Motor neuron (in vitro differentiated cells): ENCODE measurements at regions of chr21 and their contacts with region 1.

Region 1: DNA sequence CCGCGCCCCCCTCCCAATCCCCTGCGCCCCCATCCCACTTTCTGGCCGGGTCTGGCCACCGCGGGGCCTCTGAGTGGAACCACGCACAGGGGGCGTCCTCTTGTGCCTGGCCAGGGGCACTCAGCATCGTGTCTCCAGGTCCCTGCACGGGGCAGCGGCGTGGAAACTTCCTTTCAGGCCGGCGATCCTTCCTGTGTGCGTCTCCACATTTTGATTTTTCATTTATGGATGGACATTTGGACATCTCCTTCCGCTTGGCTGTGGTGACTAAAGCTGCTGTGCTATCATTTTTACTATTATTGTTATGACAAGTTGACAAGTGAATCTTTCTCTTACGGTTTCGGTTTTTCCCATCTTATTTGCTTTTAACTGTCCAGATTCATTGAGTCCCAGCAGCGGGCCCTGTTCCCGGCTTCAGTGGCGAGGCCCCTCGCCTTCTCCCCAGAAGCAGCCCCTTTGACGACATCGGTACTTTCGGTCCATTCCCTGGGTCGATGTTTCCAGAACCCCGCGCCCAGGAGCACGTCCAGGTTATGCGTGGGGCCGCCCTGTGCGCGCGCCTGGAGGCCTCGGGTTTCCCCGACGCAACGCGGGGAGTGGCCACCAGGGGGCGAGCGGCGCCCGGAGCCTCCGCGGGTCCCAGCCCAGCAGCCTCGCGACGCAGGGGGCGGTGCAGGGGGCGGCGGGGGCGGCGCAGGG is 12.4 kb upstream of the SLC19A1 start:
- ATAC-seq: peak; percentile 12 to 49 (median 34)
- H3K4me3 ChIP-seq: peak overlapping the region; percentile 21 to 43 (median 29)
- H3K27ac ChIP-seq: peak overlapping the region in 1 of 2 donors; percentile 33
- H3K4me1 ChIP-seq: peaks cover 15 to 22% of the 10 kb centered on the region in 2 donors

Region 2: DNA sequence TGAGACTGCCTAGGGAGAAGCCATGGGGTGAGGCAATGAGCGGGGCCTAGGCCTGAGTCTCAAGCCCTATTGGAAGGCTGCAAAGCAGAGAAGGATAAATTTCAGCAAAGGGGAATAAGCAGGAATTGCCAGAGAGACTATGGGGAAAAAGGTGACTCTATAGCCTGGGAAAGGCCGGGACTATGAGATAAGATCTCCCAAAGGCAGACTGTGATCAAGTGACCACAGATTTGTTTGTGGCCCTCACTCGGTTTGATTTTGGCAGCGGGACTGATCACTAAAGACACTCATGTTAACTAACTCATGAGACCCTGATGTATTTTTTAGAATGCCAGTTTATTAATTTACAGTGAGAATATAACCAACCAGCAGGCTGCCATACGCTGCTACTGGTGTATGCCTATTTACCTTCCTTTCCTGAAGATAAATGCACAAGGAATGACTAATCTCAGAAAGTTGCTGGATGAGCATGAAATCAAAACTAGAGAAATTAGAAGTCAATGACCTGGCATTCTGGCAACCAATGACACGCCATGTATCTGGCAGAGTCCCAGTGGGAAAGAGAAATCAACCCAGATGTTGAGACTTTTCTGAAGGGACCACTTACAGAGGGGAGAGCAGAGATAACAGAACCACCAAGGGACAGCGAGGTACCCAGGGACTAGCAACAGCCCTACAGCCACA is 1899.7 kb before region 1 on chr21:
- in situ Hi-C with region 1: no loop called
- ATAC-seq: no peak
- H3K4me3 ChIP-seq: no peak overlapping the region
- H3K27ac ChIP-seq: no peak overlapping the region
- H3K4me1 ChIP-seq: peaks cover 5 to 7% of the 10 kb centered on the region in 2 donors

Region 3: GRCh38 chr21:45224189-45224938 is 330.3 kb before region 1 on chr21:
- in situ Hi-C with region 1: no loop called
- ATAC-seq: no peak
- H3K4me3 ChIP-seq: no peak overlapping the region
- H3K27ac ChIP-seq: no peak overlapping the region
- H3K4me1 ChIP-seq: no peaks in the 10 kb centered on the region

Region 4: DNA sequence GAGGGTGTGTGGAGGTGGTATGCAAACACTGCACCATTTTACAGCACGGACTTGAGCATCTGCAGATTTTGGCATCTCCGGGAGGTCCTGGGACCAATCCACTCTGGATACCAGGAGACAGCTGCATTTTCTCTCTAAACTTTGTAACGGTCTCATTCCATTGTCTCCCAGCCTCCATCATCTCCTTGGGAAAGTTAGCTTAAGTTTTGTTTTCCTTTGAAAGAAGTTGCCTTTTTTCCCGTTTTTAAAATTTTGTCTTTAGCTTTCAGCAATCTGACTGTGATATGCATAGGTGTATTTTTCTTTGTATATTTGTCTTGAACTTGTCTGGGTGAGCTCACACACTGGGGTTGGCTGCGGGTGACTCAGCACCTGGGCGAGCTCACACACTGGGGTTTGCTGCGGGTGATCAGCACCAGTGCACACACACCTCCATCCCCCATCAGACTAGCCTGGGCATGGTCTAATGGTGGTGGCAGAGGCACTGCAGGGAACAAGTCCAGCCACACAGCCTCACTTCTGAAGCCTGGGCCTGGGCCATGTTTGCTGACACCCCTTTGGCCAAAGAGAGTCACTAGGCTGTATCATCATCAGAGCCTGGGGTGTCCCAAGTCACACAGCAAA is 181.8 kb before region 1 on chr21:
- in situ Hi-C with region 1: no loop called
- ATAC-seq: peak in 3 of 8 experiments; percentile 41 to 74 (median 52)
- H3K4me3 ChIP-seq: no peak overlapping the region
- H3K27ac ChIP-seq: no peak overlapping the region
- H3K4me1 ChIP-seq: peaks cover 21% of the 10 kb centered on the region in 2 donors

Region 5: DNA sequence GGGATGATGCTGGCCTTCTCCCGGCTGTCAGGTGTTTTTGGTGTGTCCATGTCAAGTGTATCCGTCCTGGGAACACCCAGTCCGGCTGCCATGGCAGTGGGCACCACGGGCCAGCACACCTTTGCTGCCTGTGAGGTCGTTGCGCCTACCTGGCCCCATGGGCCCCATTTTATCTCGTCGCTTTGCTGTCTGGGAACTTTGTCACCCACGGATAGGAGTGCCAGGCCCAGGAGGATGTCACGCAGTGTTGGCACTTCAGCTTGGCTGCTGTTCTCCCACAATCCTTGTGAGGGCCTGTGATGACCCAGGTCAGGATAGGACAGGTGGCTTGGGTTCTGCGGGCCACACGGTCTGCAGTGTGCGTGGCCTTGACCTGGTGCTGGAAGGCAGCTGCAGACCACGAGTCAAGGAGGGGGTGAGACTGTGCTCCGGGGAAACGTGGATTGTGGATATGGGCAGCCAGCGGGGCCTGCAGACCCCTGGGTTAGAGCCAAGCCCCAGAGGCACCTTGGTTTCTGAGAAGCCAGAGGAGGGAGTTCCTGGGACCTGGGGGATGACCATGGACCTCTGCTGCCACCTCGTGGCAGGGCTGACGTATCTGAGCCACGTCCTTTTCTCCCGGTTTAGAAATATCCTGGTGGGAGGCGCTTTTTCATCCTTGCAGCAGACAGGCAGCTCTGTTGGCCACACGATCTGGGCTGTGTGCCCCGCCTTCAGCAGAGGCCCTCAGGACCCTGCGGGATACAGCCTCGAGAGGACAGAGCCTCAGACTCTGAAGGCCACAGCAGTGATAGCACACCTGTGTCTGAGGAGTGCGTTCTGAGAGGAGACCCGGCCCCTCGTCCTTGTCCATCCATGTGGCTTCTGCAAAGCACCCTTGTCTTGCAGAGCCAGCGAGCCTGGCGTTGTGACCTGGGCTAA is 265.8 kb after region 1 on chr21:
- in situ Hi-C with region 1: loop called (anchors 10 to 25 kb)
- ATAC-seq: peak; percentile 93 to 98 (median 96)
- H3K4me3 ChIP-seq: no peak overlapping the region
- H3K27ac ChIP-seq: no peak overlapping the region
- H3K4me1 ChIP-seq: peaks cover 11 to 20% of the 10 kb centered on the region in 2 donors

Region 6: DNA sequence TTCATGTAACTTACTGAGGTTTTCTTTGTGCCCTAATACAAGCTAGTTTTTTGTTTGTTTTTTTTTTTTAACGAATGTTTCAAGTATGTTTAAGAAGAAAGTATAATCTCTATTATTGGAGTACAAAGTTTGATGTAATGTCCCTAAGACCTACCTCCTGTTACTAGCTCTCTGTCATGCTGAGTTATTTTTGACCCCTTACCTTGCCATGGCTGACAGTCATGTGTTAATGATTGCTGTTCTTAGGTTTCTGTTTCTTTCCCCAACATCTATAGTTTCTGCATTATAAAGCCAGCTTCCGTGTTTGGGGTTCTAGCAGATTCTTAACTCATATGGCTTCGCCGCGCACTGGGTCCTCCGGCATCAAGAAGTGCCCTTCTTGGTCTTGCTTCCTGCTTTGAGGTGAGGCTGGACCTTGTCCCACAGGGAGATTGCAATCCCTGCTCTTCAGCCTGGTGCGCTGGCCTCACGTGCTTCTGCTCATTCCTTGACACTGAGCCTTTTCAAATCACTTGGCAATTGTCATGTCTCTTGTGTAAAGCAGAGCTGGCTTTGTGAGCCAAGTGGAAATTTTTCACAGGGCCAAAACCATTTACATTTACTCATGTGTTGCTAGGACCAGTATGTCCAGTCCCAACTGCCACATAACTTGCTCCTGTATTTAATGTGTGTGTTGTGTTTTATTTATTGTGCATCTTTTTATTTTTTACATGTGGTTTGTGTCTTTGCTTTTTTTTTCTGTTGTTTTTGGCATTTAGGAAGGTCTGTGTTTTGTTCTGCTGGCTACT is 291.9 kb after region 1 on chr21:
- in situ Hi-C with region 1: loop called in 1 of 9 experiments (anchors 25 kb)
- ATAC-seq: peak in 6 of 8 experiments; percentile 28 to 87 (median 70)
- H3K4me3 ChIP-seq: no peak overlapping the region
- H3K27ac ChIP-seq: no peak overlapping the region
- H3K4me1 ChIP-seq: peaks cover 25 to 26% of the 10 kb centered on the region in 2 donors

Region 7: GRCh38 chr21:46411236-46411635 is 856.6 kb after region 1 on chr21:
- in situ Hi-C with region 1: no loop called
- ATAC-seq: peak in 2 of 8 experiments; percentile 30 to 46
- H3K4me3 ChIP-seq: no peak overlapping the region
- H3K27ac ChIP-seq: no peak overlapping the region
- H3K4me1 ChIP-seq: no peaks in the 10 kb centered on the region